Naive thymus-derived CD4-positive, alpha-beta T cell (primary cell): ENCODE measurements at regions of chr16 and their contacts with region 1.

Region 1: GRCh38 chr16:68776821-68777351 is 39.8 kb downstream of the CDH1 start:
- DNase-seq: no peak
- ATAC-seq: peak; percentile 18
- H3K4me3 ChIP-seq: no peak overlapping the region
- H3K4me3 Mint-ChIP-seq: peak overlapping the region in 1 of 10 donors; percentile 49
- H3K27ac ChIP-seq: no peak overlapping the region
- H3K27ac Mint-ChIP-seq: peak overlapping the region in 2 of 9 donors; percentile 1 to 20
- H3K4me1 ChIP-seq: peaks cover 0 to 7% of the 10 kb centered on the region in 2 donors
- H3K4me1 Mint-ChIP-seq: peaks cover 0 to 20% (median 5%) of the 10 kb centered on the region in 7 donors
- H3K27me3 ChIP-seq: no peaks in the 10 kb centered on the region
- H3K27me3 Mint-ChIP-seq: peaks cover 0 to 28% (median 3%) of the 10 kb centered on the region in 5 donors

Region 2: GRCh38 chr16:68756250-68756915 is 20.5 kb before region 1 on chr16:
- CTCF ChIA-PET with region 1: no interaction called
- POLR2A ChIA-PET with region 1: no interaction called
- intact Hi-C with region 1: loop called in 1 of 2 experiments (anchors 2 kb)
- DNase-seq: peak in 1 of 9 donors; percentile 65
- ATAC-seq: peak; percentile 40
- H3K4me3 ChIP-seq: no peak overlapping the region
- H3K4me3 Mint-ChIP-seq: peak overlapping the region in 1 of 10 donors; percentile 59
- H3K27ac ChIP-seq: no peak overlapping the region
- H3K27ac Mint-ChIP-seq: peak overlapping the region in 2 of 9 donors; percentile 43 to 92
- H3K4me1 ChIP-seq: peaks cover 0 to 10% of the 10 kb centered on the region in 2 donors
- H3K4me1 Mint-ChIP-seq: peaks cover 0 to 58% (median 0%) of the 10 kb centered on the region in 7 donors
- H3K27me3 ChIP-seq: no peaks in the 10 kb centered on the region
- H3K27me3 Mint-ChIP-seq: peaks cover 0 to 3% (median 0%) of the 10 kb centered on the region in 5 donors

Region 3: GRCh38 chr16:68860978-68861892 is 84.3 kb after region 1 on chr16:
- CTCF ChIA-PET with region 1: no interaction called
- POLR2A ChIA-PET with region 1: no interaction called
- intact Hi-C with region 1: no loop called
- DNase-seq: no peak
- ATAC-seq: no peak
- H3K4me3 ChIP-seq: no peak overlapping the region
- H3K4me3 Mint-ChIP-seq: no peak overlapping the region
- H3K27ac ChIP-seq: no peak overlapping the region
- H3K27ac Mint-ChIP-seq: peak overlapping the region in 1 of 9 donors; percentile 76
- H3K4me1 ChIP-seq: no peaks in the 10 kb centered on the region
- H3K4me1 Mint-ChIP-seq: peaks cover 0 to 33% (median 20%) of the 10 kb centered on the region in 7 donors
- H3K27me3 ChIP-seq: no peaks in the 10 kb centered on the region
- H3K27me3 Mint-ChIP-seq: no peaks in the 10 kb centered on the region